ENCODE measurements at regions of chr1 and their contacts with region 1.

Region 1: DNA sequence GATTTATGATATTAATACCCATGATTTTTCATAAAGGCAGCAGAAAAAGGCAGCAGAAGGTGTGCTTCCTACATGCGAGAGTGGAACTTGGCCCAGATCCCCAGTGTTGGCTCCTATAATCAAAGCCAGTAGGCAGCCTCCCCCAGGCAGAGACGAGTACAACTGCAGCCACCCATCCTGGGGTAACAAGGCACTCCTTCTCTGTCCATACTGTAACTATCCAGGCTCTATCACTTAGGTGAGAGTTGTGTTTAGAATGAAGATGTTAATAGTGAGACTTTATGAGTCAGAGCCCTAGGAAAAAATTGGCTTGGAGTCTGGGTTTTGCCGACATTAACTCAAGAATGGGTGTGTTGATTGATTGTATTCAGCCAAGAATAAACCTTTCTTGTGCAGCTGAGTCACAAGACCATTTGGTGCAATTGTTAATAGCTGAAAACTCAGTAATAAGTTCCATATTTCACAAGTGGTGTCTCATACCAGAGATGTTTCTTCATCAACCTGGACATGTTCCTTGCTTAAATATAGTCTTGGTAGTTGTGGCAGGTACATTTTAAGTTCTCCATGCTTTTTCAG is 322.3 kb downstream of the DUSP10 start:
- DNase-seq: peak; percentile 41
- ATAC-seq: peak; percentile 43
- H3K4me3 ChIP-seq: no peak overlapping the region
- H3K27ac ChIP-seq: no peak overlapping the region
- H3K4me1 ChIP-seq: no peaks in the 10 kb centered on the region
- H3K27me3 ChIP-seq: no peaks in the 10 kb centered on the region
- CTCF ChIP-seq: no peak

Region 2: DNA sequence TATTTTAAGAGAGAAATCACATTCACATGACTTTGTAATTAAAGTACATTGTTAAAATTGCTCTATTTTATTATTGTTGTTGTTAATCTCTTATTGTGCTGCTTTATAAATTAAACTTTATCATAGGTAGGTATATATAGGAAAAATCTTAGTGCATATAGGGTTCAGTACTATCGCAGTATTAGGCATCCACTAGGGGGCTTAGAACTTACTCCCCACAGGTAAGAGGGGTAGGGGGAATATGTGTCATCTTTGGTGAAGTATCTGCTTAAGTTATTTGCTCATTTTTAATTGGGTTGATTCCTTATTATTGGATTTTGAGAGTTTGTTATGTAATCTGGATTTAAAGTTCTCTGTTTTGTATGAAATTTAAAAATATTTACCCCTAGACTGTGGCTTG is 62.9 kb before region 1 on chr1:
- CTCF ChIA-PET with region 1: no interaction called
- POLR2A ChIA-PET with region 1: no interaction called
- intact Hi-C with region 1: loop called (anchors 5 kb)
- DNase-seq: peak; percentile 49
- ATAC-seq: peak; percentile 69; the same call in 1 of the 2 replicates
- H3K4me3 ChIP-seq: no peak overlapping the region
- H3K27ac ChIP-seq: no peak overlapping the region
- H3K4me1 ChIP-seq: no peaks in the 10 kb centered on the region
- H3K27me3 ChIP-seq: no peaks in the 10 kb centered on the region
- CTCF ChIP-seq: peak; percentile 72